AG04450 (cell line): ENCODE measurements at regions of chr20 and their contacts with region 1.

Region 1: DNA sequence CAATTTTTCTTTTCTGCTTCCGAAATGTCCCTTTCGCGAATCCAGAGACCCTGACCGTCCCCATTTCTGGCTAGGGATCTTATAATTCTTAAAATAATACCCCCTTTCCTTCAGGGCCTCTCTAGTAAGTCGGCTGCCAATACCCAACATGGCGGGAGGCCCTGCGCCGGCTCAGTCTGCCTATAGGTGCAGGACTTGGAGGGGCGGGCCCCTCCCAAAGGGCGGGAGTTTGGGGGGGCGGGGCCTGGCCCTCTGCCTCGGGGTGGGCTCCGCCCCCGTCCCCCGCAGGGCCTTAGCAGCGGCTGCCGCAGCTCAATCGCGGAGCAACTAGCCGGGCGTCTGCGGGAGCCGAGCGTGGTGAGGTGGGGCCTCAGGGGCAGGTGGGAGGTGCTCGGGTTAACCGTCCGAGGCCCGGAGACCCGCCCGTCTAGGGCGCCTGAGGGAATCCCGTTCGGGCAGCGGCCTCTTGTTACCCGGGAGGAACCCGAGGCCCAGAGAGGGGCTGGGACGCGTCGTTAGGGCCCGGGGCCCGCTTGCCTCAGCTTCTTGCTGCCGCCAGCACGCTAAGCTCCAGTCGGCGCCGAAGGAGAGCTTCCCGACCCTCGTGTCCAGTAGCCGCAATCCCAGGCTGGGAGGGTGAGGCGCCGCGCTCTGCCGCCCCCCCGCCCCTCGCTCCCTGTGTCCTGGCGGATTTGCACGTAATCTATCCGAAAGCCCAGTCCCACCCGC is at the start of gene CEP250:
- DNase-seq: peak; percentile 81
- H3K4me3 ChIP-seq: peak within 1 kb of the TSS; percentile 91
- H3K27ac ChIP-seq: peak within 1 kb of the TSS; percentile 95
- H3K27me3 ChIP-seq: no peaks in the 10 kb centered on the region
- CTCF ChIP-seq: no peak
- polyA plus RNA-seq, gene CEP250: 16.8 and 21.3 TPM in 2 replicates

Region 2: GRCh38 chr20:35284267-35284991 is 170.6 kb before region 1 on chr20 and contains the start of gene EIF6:
- CTCF ChIA-PET with region 1: no interaction called
- POLR2A ChIA-PET with region 1: interaction called, 11 read pairs
- DNase-seq: peak; percentile 55
- H3K4me3 ChIP-seq: peak within 1 kb of the TSS; percentile 95
- H3K27ac ChIP-seq: peak within 1 kb of the TSS; percentile 75
- H3K27me3 ChIP-seq: no peaks in the 10 kb centered on the region
- CTCF ChIP-seq: no peak
- polyA plus RNA-seq, gene EIF6: 133 and 157 TPM in 2 replicates

Region 3: GRCh38 chr20:35467339-35468224 is 12.5 kb after region 1 on chr20:
- CTCF ChIA-PET with region 1: interaction called, 9 read pairs
- POLR2A ChIA-PET with region 1: interaction called, 10 read pairs
- DNase-seq: no peak
- H3K4me3 ChIP-seq: no peak overlapping the region
- H3K27ac ChIP-seq: peak overlapping the region; percentile 31
- H3K27me3 ChIP-seq: no peaks in the 10 kb centered on the region
- CTCF ChIP-seq: no peak

Region 4: GRCh38 chr20:36093025-36093803 is 638.2 kb after region 1 on chr20:
- CTCF ChIA-PET with region 1: no interaction called
- POLR2A ChIA-PET with region 1: interaction called, 12 read pairs
- DNase-seq: no peak
- H3K4me3 ChIP-seq: peak overlapping the region; percentile 67
- H3K27ac ChIP-seq: no peak overlapping the region
- H3K27me3 ChIP-seq: peaks cover 38% of the 10 kb centered on the region
- CTCF ChIP-seq: no peak